Astrocyte of the cerebellum (primary cell): ENCODE measurements at regions of chr4 and their contacts with region 1.

Region 1: DNA sequence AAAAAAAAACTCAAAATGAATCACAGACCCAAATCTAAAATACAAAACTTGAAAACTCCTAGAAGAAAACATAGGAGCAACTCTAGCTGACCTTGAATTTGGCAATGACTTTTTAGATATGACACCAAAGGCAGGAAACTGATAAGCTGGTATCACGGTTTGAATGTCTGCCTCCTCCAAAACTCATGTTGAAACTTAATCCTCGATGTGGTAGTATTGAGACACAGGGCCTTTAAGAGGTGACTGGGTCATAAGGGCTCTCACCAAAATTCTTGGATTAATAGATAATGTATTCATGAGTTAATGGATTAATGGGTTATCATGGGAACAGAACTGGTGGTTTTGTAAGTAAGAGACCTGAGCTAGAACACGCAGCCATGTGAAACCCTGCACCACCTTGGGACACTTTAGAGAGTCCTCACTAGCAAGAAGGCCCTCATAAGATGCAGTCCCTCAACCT is 40.5 kb downstream of the FRYL start:
- DNase-seq: no peak
- H3K4me3 ChIP-seq: no peak overlapping the region
- CTCF ChIP-seq: no peak

Region 2: DNA sequence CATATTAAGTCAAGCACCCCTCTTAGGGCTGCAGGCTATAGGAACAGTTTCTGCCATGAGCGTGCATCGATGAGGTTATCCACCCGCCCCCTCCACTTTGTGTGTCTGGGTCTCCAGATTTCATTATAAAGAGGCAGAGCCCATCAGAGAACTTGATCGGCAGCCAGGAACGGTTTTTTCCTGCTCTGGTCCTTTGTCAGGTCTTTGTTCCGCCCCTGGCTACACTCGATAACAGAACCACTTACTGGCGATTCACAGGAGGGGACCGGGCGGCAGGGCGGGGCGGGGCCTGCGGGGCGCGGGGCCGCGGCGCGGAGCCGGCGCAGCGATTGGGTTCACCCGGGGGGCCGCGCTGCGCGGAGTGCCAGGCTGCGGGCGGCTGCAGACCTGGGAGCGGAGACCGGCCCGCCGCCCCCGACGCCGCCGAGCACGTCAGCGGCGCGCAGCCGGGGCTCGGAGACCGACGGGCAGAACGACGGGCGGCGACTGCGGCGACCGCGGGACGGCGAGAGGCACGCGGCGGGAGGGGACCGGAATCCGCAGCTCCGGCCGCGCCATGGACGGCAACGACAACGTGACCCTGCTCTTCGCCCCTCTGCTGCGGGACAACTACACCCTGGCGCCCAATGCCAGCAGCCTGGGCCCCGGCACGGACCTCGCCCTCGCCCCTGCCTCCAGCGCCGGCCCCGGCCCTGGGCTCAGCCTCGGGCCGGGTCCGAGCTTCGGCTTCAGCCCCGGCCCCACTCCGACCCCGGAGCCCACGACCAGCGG is 256.4 kb before region 1 on chr4 and contains the start of gene SLC10A4:
- in situ Hi-C with region 1: no loop called
- DNase-seq: no peak
- H3K4me3 ChIP-seq: peak within 1 kb of the TSS; percentile 26
- CTCF ChIP-seq: no peak

Region 3: DNA sequence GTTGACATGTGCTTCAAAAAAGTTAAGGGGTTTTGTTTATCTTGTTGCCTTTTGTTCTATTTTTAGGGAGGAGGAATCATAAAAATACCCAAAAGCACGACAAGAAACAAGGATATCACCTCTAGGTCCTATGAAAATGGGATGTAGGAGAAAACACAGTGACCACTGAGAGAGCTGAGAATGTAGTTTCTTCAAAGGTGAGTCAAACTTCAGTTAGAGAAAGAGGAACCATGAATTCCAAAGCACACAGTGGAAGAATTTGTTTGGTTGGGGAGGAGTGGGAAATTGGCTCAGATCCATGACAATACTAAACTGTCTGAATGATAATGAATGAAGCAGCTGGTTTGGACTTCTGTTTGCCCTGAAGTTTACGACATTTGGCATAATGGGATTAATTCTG is 59.6 kb after region 1 on chr4:
- in situ Hi-C with region 1: loop called (anchors 5 kb)
- DNase-seq: no peak
- H3K4me3 ChIP-seq: no peak overlapping the region
- CTCF ChIP-seq: no peak